ENCODE measurements at regions of chr9 and their contacts with region 1.

Region 1: DNA sequence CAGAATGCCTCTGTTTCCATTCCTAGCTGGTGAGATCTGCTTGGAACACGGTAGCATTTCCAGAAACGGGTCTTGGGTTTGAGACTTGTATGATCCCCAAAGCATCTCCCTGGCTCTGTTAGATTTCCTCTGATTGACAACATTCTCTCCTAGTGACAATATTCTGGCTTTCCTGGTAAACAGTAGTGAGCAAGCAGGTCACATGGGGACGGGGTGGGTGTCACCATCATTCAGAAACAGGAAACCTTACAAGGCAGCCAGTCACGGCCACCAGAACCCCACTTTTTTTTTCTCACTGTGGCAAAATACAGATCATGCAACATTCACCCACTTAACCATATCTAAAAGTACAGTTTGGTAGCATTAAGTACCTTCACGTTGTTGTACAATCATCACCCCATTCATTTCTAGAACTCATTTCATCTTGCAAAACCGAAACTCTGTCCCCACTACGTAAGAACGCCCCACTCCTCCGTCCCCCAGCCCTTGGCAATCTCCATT is 90.1 kb upstream of the LMX1B start:
- DNase-seq: no peak
- H3K4me3 ChIP-seq: no peak overlapping the region
- H3K27ac ChIP-seq: no peak overlapping the region
- H3K4me1 ChIP-seq: peaks cover 4 to 7% (median 5%) of the 10 kb centered on the region in 4 experiments; a peak in 5 of 7 replicates
- H3K27me3 ChIP-seq: no peaks in the 10 kb centered on the region; a peak in 1 of 7 replicates
- CTCF ChIP-seq: no peak
- EP300 ChIP-seq: no peak
- POLR2A ChIP-seq: no peak
- RAD21 ChIP-seq: no peak

Region 2: DNA sequence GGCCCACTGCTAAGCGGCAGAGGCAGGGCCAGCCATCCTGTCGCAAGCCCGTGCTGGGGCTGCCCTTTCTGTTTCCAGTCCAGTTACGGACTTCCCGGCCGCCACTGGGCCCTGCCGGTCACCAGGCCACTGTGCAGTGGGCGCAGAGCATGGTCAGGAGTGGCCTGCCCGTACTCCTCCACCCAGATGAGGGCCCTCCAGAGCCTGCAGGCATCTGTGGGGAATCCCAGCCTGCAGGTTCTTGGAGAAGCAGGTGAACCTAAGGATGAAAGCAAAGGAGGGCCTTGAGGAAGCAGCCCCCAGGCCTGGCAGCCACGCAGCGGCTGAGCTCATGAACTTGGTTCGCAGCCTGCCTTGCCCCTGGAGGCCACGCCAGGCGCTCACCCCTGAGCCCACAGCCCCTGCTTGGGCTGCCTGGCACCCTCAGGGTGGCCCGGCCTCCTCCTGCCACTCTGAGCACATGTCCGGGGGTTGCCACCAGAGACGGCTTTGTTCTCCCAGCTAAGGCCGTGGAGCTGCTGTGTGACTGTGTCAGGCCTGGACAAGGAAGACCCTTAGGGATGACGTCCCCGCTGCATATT is 17.2 kb before region 1 on chr9:
- CTCF ChIA-PET with region 1: interaction called, 15 read pairs
- POLR2A ChIA-PET with region 1: interaction called, 3 read pairs
- DNase-seq: no peak
- H3K4me3 ChIP-seq: no peak overlapping the region
- H3K27ac ChIP-seq: no peak overlapping the region
- H3K4me1 ChIP-seq: peaks cover 0 to 4% (median 1%) of the 10 kb centered on the region in 4 experiments; a peak in 2 of 7 replicates
- H3K27me3 ChIP-seq: no peaks in the 10 kb centered on the region; a peak in 3 of 7 replicates
- CTCF ChIP-seq: no peak
- EP300 ChIP-seq: no peak
- POLR2A ChIP-seq: no peak
- RAD21 ChIP-seq: no peak

Region 3: DNA sequence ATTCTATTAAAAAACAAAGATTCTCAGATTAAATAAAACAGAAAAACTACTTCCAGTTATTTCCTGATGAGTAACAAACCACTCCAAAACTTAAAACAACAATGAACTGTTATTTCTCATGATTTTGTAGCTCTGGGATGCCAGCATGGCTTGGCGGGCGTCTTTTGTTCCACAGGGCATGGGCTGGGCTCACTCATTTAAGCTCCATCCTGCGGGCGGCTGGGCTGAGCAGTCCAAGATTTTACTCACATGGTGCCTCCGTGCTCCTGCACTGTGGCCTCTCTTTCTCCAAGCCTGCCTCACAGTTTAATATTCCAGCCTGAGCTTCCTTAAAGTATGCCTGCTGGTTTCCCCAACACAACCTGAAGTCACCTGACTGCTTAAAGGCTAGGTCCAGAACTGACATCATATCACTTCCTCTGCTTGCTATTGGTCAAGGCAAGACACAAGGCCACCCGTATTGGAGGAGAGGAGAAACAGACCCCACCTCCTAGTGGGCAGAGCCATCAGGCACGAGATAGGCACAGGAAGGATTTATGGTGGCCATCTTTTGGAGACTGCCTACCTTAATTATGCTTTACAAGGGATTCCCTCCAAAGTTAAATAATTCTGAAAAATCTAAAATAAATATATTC is 239.6 kb after region 1 on chr9:
- CTCF ChIA-PET with region 1: no interaction called
- POLR2A ChIA-PET with region 1: no interaction called
- DNase-seq: no peak
- H3K4me3 ChIP-seq: no peak overlapping the region
- H3K27ac ChIP-seq: no peak overlapping the region
- H3K4me1 ChIP-seq: no peaks in the 10 kb centered on the region
- H3K27me3 ChIP-seq: no peaks in the 10 kb centered on the region
- CTCF ChIP-seq: no peak
- EP300 ChIP-seq: no peak
- POLR2A ChIP-seq: no peak
- RAD21 ChIP-seq: no peak

Measured in H1 (cell line).